ENCODE measurements at regions of chr4 and their contacts with region 1.

Region 1: GRCh38 chr4:139030614-139031235 is 15.1 kb downstream of the NOCT start:
- DNase-seq: no peak
- H3K4me3 ChIP-seq: no peak overlapping the region
- CTCF ChIP-seq: peak; percentile 80

Region 2: DNA sequence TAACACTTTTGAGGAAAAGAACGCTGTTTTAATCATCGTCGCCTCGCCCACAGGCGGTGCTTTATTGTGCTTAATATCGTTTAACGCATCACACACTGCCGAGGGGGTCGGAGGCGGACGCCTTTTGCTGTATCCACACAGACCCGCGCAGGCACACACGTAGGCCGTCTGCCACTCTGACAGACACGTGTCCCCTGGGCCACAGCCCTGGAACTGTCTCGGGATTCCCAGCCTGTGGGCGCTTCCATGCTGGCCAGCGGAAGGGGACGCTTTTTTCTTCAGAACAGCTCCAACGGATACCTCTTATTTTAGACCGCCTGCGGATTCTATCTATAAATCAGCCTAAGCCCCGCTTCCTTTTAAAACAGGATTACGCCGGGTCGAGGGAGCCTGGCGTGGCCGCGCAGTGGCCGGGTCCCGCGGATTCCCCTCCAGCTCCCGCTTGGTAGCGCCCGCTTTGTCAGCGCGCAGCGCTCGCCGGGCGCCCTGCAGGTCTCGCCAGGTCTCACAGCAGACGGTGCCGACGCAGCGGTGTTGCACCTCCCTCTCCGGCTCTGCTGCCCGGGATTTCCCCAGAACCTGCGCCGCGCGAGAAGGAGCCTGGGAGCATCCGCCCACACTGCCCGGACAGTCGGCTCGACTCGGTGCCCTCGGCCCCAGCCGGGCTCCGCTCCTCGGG is 15.3 kb before region 1 on chr4 and contains the start of gene NOCT:
- CTCF ChIA-PET with region 1: interaction called, 93 read pairs
- POLR2A ChIA-PET with region 1: interaction called, 3 read pairs
- DNase-seq: peak; percentile 49
- H3K4me3 ChIP-seq: peak within 1 kb of the TSS; percentile 76
- CTCF ChIP-seq: no peak

Region 3: GRCh38 chr4:139042981-139043460 is 12.3 kb after region 1 on chr4:
- CTCF ChIA-PET with region 1: interaction called, 124 read pairs
- POLR2A ChIA-PET with region 1: no interaction called
- DNase-seq: no peak
- H3K4me3 ChIP-seq: no peak overlapping the region
- CTCF ChIP-seq: no peak

Region 4: GRCh38 chr4:139054791-139055376 is 24.2 kb after region 1 on chr4:
- CTCF ChIA-PET with region 1: interaction called, 124 read pairs
- POLR2A ChIA-PET with region 1: no interaction called
- DNase-seq: no peak
- H3K4me3 ChIP-seq: no peak overlapping the region
- CTCF ChIP-seq: no peak

Region 5: DNA sequence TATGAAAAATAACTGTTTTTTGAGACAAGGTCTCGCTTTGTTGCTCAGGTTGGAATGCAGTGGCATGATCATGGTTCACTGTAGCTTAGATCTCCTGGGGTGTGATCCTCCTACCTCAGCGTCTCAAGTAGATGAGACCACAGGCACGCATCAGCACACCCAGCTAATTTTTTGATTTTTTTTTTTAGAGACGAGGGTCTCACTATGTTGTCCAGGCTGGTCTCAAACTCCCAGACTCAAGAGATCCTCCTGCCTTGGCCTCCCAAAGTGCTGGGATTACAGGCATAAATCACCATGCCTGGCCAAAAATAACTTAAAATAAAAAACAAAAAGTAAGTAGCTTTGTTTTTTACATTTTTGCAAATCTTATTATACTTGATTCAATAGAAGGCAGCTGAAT is 48.2 kb after region 1 on chr4:
- CTCF ChIA-PET with region 1: interaction called, 14 read pairs
- POLR2A ChIA-PET with region 1: interaction called, 5 read pairs
- DNase-seq: no peak
- H3K4me3 ChIP-seq: no peak overlapping the region
- CTCF ChIP-seq: no peak

Region 6: GRCh38 chr4:139083956-139084803 is 53.5 kb after region 1 on chr4:
- CTCF ChIA-PET with region 1: interaction called, 15 read pairs
- POLR2A ChIA-PET with region 1: interaction called, 5 read pairs
- DNase-seq: peak; percentile 49
- H3K4me3 ChIP-seq: peak overlapping the region; percentile 93
- CTCF ChIP-seq: peak; percentile 32

Region 7: DNA sequence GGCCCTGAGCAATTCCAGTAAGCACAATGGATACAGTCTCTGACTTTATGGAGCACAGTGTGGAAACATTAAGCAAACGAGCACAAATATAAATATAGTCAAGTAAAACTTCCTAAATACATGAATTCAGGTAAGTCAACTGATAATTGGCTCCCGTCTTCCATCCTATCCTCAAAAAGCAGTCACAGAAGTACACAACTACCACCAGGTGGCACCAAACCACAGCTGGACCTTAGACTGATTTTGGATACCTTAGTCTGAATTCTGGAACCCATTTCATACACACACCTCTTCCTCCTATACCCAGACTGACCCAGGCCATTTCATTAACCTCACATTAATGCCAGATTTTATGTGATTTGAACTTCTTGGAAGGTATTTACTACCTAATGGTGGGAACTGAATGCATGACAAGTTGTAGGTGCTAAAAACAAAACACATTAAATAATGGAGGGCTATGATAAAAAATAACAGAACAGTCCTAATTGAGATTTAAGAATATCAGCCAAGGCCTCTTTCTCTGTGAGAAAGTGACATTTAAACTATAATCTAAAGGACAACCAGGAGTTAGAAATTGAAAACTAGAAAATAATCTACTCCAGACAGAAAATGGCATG is 68.7 kb after region 1 on chr4:
- CTCF ChIA-PET with region 1: interaction called, 25 read pairs
- POLR2A ChIA-PET with region 1: no interaction called
- DNase-seq: no peak
- H3K4me3 ChIP-seq: no peak overlapping the region
- CTCF ChIP-seq: peak; percentile 85

Measured in AG04449 (cell line).